Dorsolateral prefrontal cortex (tissue), 120 donors: ENCODE measurements at regions of chr1 and their contacts with region 1.

Region 1: GRCh38 chr1:77468257-77468948 is 186.6 kb downstream of the AK5 start:
- DNase-seq: no peak
- H3K4me3 ChIP-seq: no peak overlapping the region
- H3K27ac ChIP-seq: peak overlapping the region; percentile 62 to 97 (median 91)
- H3K27me3 ChIP-seq: no peaks in the 10 kb centered on the region
- CTCF ChIP-seq: no peak

Region 2: GRCh38 chr1:77504986-77505385 is 36.6 kb after region 1 on chr1:
- intact Hi-C with region 1: loop called in 1 of 2 experiments (anchors 5 kb)
- DNase-seq: no peak
- H3K4me3 ChIP-seq: no peak overlapping the region
- H3K27ac ChIP-seq: peak overlapping the region in 20 of 59 donors; percentile 4 to 61 (median 36)
- H3K27me3 ChIP-seq: no peaks in the 10 kb centered on the region
- CTCF ChIP-seq: no peak

Region 3: GRCh38 chr1:77571642-77572041 is 103.2 kb after region 1 on chr1:
- intact Hi-C with region 1: no loop called
- DNase-seq: no peak
- H3K4me3 ChIP-seq: no peak overlapping the region
- H3K27ac ChIP-seq: no peak overlapping the region
- H3K27me3 ChIP-seq: no peaks in the 10 kb centered on the region
- CTCF ChIP-seq: no peak

Region 4: GRCh38 chr1:77642196-77642595 is 173.8 kb after region 1 on chr1:
- intact Hi-C with region 1: no loop called
- DNase-seq: no peak
- H3K4me3 ChIP-seq: no peak overlapping the region
- H3K27ac ChIP-seq: peak overlapping the region in 37 of 59 donors; percentile 7 to 91 (median 74)
- H3K27me3 ChIP-seq: no peaks in the 10 kb centered on the region
- CTCF ChIP-seq: no peak